Stomach (tissue), 19 donors: ENCODE measurements at regions of chr4 and their contacts with region 1.

Region 1: DNA sequence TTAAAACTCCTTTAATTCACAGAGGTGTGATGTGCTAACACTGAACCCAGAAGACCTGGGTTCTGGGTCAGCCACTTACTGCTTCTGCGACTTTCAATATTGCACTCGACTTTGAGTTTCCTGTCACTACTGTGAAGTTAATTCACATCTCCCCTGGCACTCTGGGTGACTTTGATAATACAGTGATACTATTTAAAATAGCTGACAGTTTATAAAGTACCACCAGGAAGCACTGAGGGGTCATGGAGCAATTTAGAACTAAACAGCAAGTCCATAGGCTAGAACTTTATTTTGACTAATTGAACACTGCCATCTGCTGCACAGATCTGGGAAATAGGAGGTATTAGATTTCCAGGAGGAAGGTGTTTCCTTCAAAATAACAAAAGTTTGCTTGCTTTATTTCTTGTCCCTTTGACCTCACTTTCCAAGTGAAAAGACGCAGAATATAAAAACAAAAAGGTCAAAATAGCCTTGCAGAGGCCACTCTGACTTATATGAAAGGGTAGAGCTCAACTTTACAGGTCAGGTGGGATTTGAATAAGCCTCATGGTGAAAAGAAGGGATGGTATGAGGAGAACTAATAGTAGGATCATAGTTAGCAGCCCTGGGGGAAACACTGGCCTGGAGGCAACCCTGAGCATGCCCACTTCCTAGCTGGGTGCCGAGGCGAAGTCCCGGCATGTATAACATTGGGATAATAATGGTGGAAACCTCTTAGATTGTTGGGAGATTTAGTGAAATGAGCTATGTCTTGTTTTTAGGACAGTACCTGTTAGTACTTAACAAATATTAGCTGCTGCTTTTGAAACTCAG is 53.4 kb downstream of the ZNF518B start:
- DNase-seq: peak in 1 of 2 donors; percentile 70
- H3K4me3 ChIP-seq: no peak overlapping the region
- H3K27ac ChIP-seq: no peak overlapping the region
- H3K4me1 ChIP-seq: no peaks in the 10 kb centered on the region
- H3K27me3 ChIP-seq: no peaks in the 10 kb centered on the region
- CTCF ChIP-seq: peak in 4 of 7 experiments; percentile 20 to 69 (median 37)
- EP300 ChIP-seq: no peak
- POLR2A ChIP-seq: no peak

Region 2: GRCh38 chr4:10157478-10158332 is 246.1 kb before region 1 on chr4:
- intact Hi-C with region 1: loop called (anchors 5 kb)
- DNase-seq: peak; percentile 62 to 88
- H3K4me3 ChIP-seq: peak overlapping the region in 1 of 4 donors; percentile 10
- H3K27ac ChIP-seq: peak overlapping the region in 2 of 5 donors; percentile 44 to 62
- H3K4me1 ChIP-seq: peaks cover 6 to 27% (median 15%) of the 10 kb centered on the region in 4 donors
- H3K27me3 ChIP-seq: no peaks in the 10 kb centered on the region
- CTCF ChIP-seq: peak in 5 of 7 experiments; percentile 69 to 81 (median 72)
- EP300 ChIP-seq: no peak
- POLR2A ChIP-seq: no peak